Transverse colon (tissue), 4 donors: ENCODE measurements at regions of chr17 and their contacts with region 1.

Region 1: DNA sequence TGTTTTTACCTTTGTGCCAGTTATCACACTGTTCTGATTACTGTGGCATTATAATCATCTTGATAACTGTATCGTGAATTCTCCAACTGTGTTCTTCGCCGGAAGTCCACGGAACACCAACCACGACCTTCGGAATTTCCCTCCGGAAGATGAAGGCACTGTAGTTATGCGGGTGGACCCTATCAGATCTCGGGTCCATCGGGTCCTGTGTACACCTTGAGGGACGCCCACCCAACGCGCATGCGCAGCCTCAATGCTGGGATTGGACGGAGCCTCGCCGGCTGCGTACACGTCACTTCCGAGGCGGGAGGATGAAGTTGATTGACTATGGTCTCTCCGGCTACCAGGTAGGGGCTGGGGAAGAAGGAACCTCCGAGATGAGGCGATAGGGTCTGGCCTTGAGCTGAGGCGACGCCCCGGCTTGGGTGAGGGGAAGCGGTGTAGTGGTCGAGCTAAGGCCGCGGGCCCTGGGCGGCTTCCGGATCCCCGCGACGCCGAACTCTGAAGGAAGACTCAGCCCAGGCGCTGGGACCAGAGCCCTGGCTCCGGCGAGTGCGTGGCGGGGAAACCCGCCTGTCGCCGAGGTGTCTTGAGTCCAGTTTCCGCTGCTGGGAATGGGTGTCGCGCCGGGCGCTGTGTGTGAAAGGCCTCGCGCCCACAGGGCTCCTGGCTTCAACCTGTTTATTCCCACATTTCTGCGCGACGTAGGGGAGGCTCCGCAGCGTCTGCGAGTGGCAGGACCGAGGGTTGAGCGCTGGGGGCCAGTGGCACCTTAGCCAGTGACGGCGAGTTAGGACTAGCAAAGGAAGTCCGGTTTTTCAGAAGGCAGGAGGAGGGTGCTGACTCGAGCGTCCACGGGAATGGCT is at the start of gene DHRS7B:
- DNase-seq: peak; percentile 98
- H3K4me3 ChIP-seq: peak within 1 kb of the TSS; percentile 67 to 80 (median 75)
- H3K27ac ChIP-seq: peak within 1 kb of the TSS; percentile 94 to 95 (median 94)
- H3K4me1 ChIP-seq: peaks cover 0 to 23% (median 7%) of the 10 kb centered on the region in 4 donors
- H3K27me3 ChIP-seq: no peaks in the 10 kb centered on the region
- CTCF ChIP-seq: no peak
- EP300 ChIP-seq: no peak
- POLR2A ChIP-seq: peak; percentile 90
- total RNA-seq, gene DHRS7B: 14.6 to 80.6 (median 47.7) TPM

Region 2: GRCh38 chr17:21043286-21044232 is 83.3 kb before region 1 on chr17:
- in situ Hi-C with region 1: loop called in 1 of 4 experiments (anchors 10 kb)
- intact Hi-C with region 1: no loop called
- DNase-seq: peak; percentile 98
- H3K4me3 ChIP-seq: peak overlapping the region; percentile 69 to 95 (median 87)
- H3K27ac ChIP-seq: peak overlapping the region; percentile 99 to 100 (median 100)
- H3K4me1 ChIP-seq: peaks cover 20 to 34% (median 29%) of the 10 kb centered on the region in 4 donors
- H3K27me3 ChIP-seq: no peaks in the 10 kb centered on the region
- CTCF ChIP-seq: peak; percentile 85 to 97 (median 91)
- EP300 ChIP-seq: no peak
- POLR2A ChIP-seq: peak; percentile 48

Region 3: DNA sequence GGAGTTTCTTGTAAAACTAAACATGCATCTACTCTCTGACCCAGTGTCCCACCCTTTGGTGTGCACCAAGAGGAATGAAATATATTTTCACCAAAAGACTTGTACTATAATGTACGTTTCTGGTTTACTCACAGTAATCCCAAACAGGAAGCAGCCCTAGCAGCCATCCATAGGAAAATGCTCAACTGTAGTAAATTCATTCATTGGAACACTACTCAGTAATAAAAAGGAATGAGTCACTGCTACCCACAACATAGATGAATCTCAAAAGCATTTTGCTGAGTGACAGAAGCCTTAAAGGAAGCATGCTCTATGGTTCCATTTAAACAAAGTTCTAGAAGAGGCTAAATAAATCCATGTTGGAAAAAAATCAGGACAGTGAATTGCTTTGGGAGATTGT is 37.7 kb before region 1 on chr17:
- in situ Hi-C with region 1: no loop called
- intact Hi-C with region 1: no loop called
- DNase-seq: no peak
- H3K4me3 ChIP-seq: no peak overlapping the region
- H3K27ac ChIP-seq: no peak overlapping the region
- H3K4me1 ChIP-seq: peaks cover 0 to 22% (median 7%) of the 10 kb centered on the region in 4 donors
- H3K27me3 ChIP-seq: no peaks in the 10 kb centered on the region
- CTCF ChIP-seq: no peak
- EP300 ChIP-seq: no peak
- POLR2A ChIP-seq: no peak

Region 4: DNA sequence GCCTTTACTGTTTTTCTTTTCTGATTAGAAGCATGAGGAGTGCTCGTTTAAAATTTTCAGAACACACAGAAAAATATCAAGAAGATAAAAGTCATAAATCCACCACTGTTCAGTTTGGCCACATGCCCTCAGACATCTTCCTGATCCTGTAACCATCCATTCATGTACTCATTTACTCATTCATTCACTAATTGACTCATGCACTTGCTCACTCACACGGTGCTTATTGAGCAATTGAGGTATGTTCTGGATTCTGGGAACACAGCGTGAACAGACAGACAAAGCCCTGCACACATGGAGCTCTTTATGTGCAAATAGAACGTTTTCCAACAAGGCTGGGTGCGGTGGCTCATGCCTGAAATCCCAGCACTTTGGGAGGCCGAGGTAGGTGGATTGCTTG is 136.5 kb after region 1 on chr17:
- in situ Hi-C with region 1: loop called in 1 of 4 experiments (anchors 10 kb)
- intact Hi-C with region 1: no loop called
- DNase-seq: no peak
- H3K4me3 ChIP-seq: no peak overlapping the region
- H3K27ac ChIP-seq: no peak overlapping the region
- H3K4me1 ChIP-seq: no peaks in the 10 kb centered on the region
- H3K27me3 ChIP-seq: no peaks in the 10 kb centered on the region
- CTCF ChIP-seq: no peak
- EP300 ChIP-seq: no peak
- POLR2A ChIP-seq: no peak

Region 5: GRCh38 chr17:21284319-21285163 is 157.7 kb after region 1 on chr17 and contains the start of gene MAP2K3:
- in situ Hi-C with region 1: no loop called
- intact Hi-C with region 1: loop called (anchors 5 kb)
- DNase-seq: peak; percentile 100
- H3K4me3 ChIP-seq: peak within 1 kb of the TSS; percentile 82 to 97 (median 92)
- H3K27ac ChIP-seq: peak within 1 kb of the TSS; percentile 98 to 99 (median 98)
- H3K4me1 ChIP-seq: peaks cover 28 to 53% (median 43%) of the 10 kb centered on the region in 4 donors
- H3K27me3 ChIP-seq: no peaks in the 10 kb centered on the region
- CTCF ChIP-seq: no peak
- EP300 ChIP-seq: no peak
- POLR2A ChIP-seq: peak; percentile 77
- total RNA-seq, gene MAP2K3: 44.4 to 148 (median 59.6) TPM